ENCODE measurements at regions of chr6 and their contacts with region 1.

Region 1: GRCh38 chr6:52130440-52130839 is 43.0 kb upstream of the PKHD1 start:
- DNase-seq: no peak
- H3K4me3 Mint-ChIP-seq: no peak overlapping the region
- H3K27ac Mint-ChIP-seq: no peak overlapping the region
- H3K4me1 Mint-ChIP-seq: peaks cover 5% of the 10 kb centered on the region
- H3K27me3 Mint-ChIP-seq: peaks cover 2% of the 10 kb centered on the region

Region 2: DNA sequence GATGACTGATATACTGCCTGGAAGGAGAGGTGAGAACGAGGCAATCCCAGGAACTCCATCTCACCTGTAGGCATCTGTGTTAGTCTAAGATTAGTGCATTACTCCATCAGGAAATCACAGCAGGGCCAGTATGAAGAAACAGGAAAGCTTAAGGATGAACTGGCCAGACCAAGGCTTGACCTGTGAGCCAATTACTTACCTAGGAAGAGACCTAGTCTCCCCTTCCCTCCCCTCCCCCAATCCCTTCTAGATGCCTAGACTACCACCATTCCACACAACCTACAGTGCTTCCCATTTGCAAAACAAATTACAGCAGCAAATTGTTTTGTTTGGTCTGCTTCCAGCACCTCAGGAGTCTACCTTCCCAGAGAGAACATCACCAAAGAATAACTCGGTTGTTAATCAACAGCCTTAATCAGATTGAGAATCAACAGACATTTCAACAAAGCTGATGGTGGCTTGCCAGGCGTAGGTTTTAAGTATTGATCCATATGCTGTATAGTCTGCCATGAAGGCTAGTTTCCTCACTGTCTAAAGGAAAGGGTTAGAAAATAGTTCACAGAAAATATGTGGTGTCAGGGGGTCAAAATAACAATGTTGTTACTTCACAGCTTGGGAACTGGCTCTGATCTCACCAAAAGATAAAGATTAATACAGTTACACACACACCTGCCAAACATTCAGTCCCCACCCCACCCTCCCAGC is 53.1 kb before region 1 on chr6:
- CTCF ChIA-PET with region 1: no interaction called
- intact Hi-C with region 1: loop called (anchors 5 kb)
- DNase-seq: no peak
- H3K4me3 Mint-ChIP-seq: no peak overlapping the region
- H3K27ac Mint-ChIP-seq: no peak overlapping the region
- H3K4me1 Mint-ChIP-seq: no peaks in the 10 kb centered on the region
- H3K27me3 Mint-ChIP-seq: peaks cover 16% of the 10 kb centered on the region

Region 3: GRCh38 chr6:52603000-52603795 is 472.8 kb after region 1 on chr6:
- CTCF ChIA-PET with region 1: no interaction called
- intact Hi-C with region 1: no loop called
- DNase-seq: no peak
- H3K4me3 Mint-ChIP-seq: no peak overlapping the region
- H3K27ac Mint-ChIP-seq: no peak overlapping the region
- H3K4me1 Mint-ChIP-seq: peaks cover 5% of the 10 kb centered on the region
- H3K27me3 Mint-ChIP-seq: no peaks in the 10 kb centered on the region